Astrocyte of the cerebellum (primary cell): ENCODE measurements at regions of chr4 and their contacts with region 1.

Region 1: GRCh38 chr4:56690393-56690792 is 9.3 kb upstream of the HOPX start:
- DNase-seq: no peak
- H3K4me3 ChIP-seq: no peak overlapping the region
- CTCF ChIP-seq: peak; percentile 26

Region 2: GRCh38 chr4:56435306-56435926 is 255.0 kb before region 1 on chr4 and contains the start of gene PPAT:
- in situ Hi-C with region 1: no loop called
- DNase-seq: peak; percentile 90
- H3K4me3 ChIP-seq: peak within 1 kb of the TSS; percentile 85
- CTCF ChIP-seq: peak; percentile 31

Region 3: DNA sequence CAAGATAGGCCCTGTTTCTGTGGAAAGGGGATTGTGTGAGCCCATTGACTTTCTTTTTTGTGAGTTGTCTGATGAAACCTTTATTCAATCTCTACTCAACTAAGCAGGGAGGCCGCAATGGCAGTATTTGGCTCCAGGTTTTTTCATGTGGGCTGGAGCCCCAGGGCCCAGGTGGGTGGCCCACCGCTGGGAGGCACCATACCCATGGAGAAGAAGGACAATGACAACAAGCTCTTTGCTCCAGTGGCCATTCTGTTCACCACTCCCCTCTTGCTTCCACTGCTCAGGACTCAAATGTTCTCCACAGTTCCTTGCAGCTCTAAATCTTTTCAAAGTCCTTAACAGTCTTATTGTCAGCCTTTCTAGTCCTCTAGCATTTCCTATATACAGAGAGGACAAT is 63.4 kb before region 1 on chr4:
- in situ Hi-C with region 1: no loop called
- DNase-seq: no peak
- H3K4me3 ChIP-seq: no peak overlapping the region
- CTCF ChIP-seq: no peak

Region 4: DNA sequence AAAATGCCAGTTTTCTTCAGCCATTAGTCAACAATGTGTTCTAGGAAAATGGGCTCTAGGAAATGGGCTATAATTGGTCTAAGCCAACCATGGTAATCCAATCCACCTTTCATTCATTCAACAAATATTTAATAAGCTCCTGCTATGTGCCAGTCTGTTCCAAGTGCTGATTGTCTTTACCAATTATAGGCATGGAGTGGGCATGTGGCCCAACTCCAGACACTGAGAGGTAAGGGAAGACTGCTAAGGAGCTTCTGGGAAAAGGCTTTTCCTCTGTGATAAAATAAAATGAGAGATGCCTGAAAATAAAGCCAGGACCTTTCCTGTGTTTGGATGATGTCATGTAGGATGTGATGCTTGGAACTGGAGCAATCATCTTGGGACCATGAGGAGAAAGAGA is 52.6 kb before region 1 on chr4:
- in situ Hi-C with region 1: loop called (anchors 5 kb)
- DNase-seq: no peak
- H3K4me3 ChIP-seq: no peak overlapping the region
- CTCF ChIP-seq: no peak

Region 5: GRCh38 chr4:56668298-56668697 is 22.1 kb before region 1 on chr4:
- in situ Hi-C with region 1: no loop called
- DNase-seq: no peak
- H3K4me3 ChIP-seq: no peak overlapping the region
- CTCF ChIP-seq: peak; percentile 14

Region 6: GRCh38 chr4:56786955-56787354 is 96.6 kb after region 1 on chr4:
- in situ Hi-C with region 1: no loop called
- DNase-seq: peak; percentile 54
- H3K4me3 ChIP-seq: no peak overlapping the region
- CTCF ChIP-seq: no peak